Activated CD4-positive, alpha-beta T cell treated with anti-CD3 and anti-CD28 coated beads for 36 hours (primary cell): ENCODE measurements at regions of chr5 and their contacts with region 1.

Region 1: DNA sequence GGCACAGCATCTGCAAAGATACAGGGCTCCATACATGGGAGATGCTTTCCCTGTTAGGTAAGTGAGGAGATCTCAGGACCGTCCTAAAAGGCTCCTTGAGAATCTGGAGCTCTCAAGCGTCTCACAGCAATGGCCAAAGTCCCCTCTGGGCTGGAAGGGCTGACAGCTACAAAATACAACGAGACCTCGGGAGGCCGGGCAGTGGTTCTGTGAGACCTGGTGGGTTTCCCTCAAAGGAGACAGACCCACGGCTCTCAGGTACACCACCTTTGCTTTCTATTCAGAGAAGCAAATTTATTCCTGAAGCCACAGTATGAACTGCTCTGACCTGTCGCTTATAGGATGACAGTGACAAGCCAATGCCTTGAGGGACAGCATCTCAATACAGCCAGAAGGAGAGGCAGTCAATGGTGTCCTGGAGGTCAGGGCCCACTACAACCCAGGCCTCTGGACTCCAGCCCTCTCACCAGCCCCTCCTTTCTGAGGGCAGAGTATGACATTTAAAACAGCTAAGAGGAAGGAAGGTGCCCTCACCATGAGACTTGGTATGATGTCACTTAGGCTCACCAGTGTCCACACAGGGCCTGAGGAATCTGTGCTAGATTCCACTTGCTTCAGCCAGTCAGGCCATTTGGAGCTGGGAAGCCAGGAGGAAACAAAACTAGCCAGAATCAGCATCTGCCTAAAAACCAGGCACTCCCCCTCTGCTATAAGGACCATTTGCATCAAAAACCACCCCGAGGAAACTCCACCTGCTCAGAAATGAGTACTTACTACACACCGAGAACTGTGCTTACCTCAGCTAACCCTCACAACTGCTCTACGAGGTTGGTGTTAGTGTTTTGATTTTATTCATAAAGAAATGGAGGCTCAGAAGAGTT is 86.5 kb upstream of the FSTL4 start:
- DNase-seq: peak; percentile 55
- ATAC-seq: peak; percentile 96
- H3K4me3 Mint-ChIP-seq: no peak overlapping the region
- H3K27ac Mint-ChIP-seq: no peak overlapping the region
- H3K4me1 Mint-ChIP-seq: peaks cover 13% of the 10 kb centered on the region
- H3K27me3 Mint-ChIP-seq: peaks cover 3% of the 10 kb centered on the region

Region 2: DNA sequence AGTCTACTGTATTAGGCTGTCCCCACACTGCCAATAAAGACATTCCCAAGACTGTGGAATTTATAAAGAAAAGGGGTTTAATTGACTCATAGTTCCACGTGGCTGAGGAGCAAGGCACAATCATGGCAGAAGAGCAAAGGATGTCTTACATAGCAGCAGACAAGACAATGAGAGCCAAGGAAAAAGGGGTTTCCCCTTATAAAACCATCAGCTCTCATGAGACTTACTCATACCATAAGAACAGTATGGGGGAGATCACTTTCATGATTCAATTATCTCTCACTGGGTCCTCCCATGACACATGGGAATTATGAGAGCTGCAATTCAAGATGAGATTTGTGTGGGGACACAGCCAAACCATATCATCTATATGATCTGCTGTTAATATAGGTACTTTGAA is 71.7 kb before region 1 on chr5:
- CTCF ChIA-PET with region 1: no interaction called
- POLR2A ChIA-PET with region 1: interaction called, 3 read pairs
- intact Hi-C with region 1: loop called in 1 of 2 experiments (anchors 1 kb)
- DNase-seq: peak; percentile 13
- ATAC-seq: peak; percentile 99
- H3K4me3 Mint-ChIP-seq: no peak overlapping the region
- H3K27ac Mint-ChIP-seq: no peak overlapping the region
- H3K4me1 Mint-ChIP-seq: peaks cover 7% of the 10 kb centered on the region
- H3K27me3 Mint-ChIP-seq: peaks cover 44% of the 10 kb centered on the region